Caco-2 (cell line): ENCODE measurements at regions of chr12 and their contacts with region 1.

Region 1: DNA sequence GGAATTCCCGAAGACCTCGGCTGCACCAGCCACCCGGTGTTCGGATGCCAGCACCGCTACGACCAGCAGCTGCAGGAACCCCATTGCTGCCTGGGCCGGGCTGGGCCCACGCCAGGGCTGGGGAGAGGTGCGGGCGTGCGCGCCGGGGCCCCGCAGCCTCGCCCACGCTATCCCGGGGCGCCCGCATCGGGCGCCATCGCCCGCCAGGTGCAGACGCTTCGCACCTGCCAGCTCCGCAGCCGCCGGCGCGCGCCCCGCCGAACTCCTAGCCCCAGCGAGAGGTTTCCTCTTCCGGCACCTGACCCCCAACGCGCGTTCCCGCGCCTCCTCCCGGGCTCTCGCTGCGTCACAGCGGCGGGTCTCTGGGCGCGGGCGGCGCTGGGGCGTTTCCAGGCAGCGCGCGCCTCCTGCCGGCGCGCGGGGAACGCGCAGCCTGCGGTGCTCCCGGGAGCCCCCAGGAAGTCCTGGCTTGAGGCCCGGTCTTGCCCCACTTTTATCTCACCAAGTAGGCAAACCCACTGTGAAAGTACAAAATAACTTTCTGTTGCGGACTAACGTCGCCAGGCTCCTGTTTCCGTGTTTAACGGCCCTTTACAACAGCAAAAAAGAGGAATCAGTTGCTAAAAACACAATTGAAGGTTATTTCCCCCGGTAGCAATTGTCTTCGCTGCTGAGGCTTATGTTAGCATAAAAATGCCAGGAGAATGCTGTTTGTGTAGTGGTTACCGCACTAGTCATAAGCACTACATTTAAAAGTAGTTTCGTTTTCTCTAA is at the start of gene TM7SF3:
- DNase-seq: peak; percentile 97 to 99
- H3K4me3 ChIP-seq: peak within 1 kb of the TSS; percentile 62
- H3K4me3 Mint-ChIP-seq: peak within 1 kb of the TSS; percentile 90
- H3K27ac Mint-ChIP-seq: peak within 1 kb of the TSS; percentile 13
- H3K4me1 ChIP-seq: peaks cover 18% of the 10 kb centered on the region
- H3K4me1 Mint-ChIP-seq: peaks cover 25% of the 10 kb centered on the region
- H3K27me3 ChIP-seq: no peaks in the 10 kb centered on the region
- H3K27me3 Mint-ChIP-seq: no peaks in the 10 kb centered on the region
- CTCF ChIP-seq: peak; percentile 89 to 99
- total RNA-seq, gene TM7SF3: 82.9 and 83.0 TPM in 2 replicates

Region 2: DNA sequence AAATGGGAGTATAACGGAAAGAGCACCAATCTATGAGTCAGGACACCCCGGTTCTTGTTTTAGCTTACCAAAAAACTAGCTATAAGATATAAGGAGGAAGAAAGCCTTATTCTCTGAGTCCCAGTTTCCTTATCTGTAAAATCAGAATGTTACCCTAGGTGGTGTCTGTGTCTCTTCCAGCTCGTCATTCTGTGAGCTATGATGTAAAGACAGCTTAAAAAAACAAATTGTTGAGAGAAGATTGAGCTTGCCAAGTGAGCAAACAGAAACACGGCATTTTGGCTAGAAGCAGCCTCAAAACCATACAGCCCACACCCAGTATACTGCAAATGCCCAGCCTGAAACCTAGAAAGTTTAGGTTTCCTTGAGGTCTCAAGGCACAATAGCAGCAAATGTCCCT is 667.6 kb before region 1 on chr12:
- CTCF ChIA-PET with region 1: no interaction called
- POLR2A ChIA-PET with region 1: no interaction called
- intact Hi-C with region 1: no loop called
- DNase-seq: no peak
- H3K4me3 ChIP-seq: no peak overlapping the region
- H3K4me3 Mint-ChIP-seq: no peak overlapping the region
- H3K27ac Mint-ChIP-seq: no peak overlapping the region
- H3K4me1 ChIP-seq: no peaks in the 10 kb centered on the region
- H3K4me1 Mint-ChIP-seq: no peaks in the 10 kb centered on the region
- H3K27me3 ChIP-seq: no peaks in the 10 kb centered on the region
- H3K27me3 Mint-ChIP-seq: no peaks in the 10 kb centered on the region
- CTCF ChIP-seq: no peak

Region 3: DNA sequence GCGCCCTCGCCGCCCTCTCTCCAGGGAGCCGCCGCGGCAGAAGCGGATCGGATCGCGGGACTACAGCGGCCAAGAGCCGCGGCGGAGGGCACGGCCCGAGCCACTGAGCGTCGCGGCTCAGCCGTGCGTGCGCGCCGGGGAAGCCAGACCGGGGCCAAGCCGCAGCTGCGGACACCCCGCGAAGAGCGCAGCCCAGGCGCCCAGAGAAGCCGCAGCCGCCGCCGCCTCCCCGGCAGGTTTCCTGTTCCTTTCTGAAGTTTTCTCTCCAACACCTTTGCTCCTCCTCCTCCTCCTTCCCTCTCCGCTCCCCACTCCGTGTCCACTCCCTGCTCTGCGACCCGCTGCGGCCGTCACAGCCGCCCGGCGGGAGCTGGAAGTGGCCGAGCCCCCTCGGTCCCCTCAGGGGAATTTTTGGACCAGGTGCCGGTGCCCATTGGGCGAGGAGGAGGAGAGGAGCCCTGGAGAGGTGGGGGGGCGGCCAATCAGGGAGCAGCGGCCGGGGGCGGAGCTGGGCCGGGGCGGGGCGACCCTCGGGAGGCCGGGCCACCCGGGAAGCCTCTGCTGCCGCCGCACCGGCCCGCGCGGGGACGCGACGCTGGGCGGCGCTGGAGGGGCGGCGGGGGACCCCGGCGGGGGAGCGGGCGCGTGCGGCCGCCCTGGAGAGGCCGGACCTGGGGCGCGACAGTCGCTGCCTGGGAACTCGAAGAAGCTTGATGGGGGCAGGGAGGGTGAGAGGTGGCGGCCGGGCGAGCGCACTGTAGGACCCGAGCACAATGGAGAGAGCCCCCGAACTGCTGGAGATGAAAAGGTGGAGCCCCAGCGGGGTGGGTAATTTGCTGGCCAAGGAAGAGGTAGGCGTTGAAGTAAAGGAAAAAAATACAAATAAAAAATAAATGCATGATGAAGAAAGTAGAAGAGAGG is 181.2 kb before region 1 on chr12 and contains the start of gene ITPR2:
- CTCF ChIA-PET with region 1: interaction called, 21 read pairs
- POLR2A ChIA-PET with region 1: interaction called, 4 read pairs
- intact Hi-C with region 1: loop called (anchors 5 kb)
- DNase-seq: peak; percentile 98 to 99
- H3K4me3 ChIP-seq: peak within 1 kb of the TSS; percentile 97
- H3K4me3 Mint-ChIP-seq: peak within 1 kb of the TSS; percentile 87
- H3K27ac Mint-ChIP-seq: peak within 1 kb of the TSS; percentile 86
- H3K4me1 ChIP-seq: 0 out of 2 replicates have a peak, but pooled peaks cover 8% of the 10 kb centered on the region
- H3K4me1 Mint-ChIP-seq: peaks cover 16% of the 10 kb centered on the region
- H3K27me3 ChIP-seq: no peaks in the 10 kb centered on the region
- H3K27me3 Mint-ChIP-seq: no peaks in the 10 kb centered on the region
- CTCF ChIP-seq: peak; percentile 18 to 36
- total RNA-seq, gene ITPR2: 41.6 and 51.5 TPM in 2 replicates

Region 4: GRCh38 chr12:26884765-26885576 is 129.3 kb before region 1 on chr12:
- CTCF ChIA-PET with region 1: interaction called, 3 read pairs
- POLR2A ChIA-PET with region 1: no interaction called
- intact Hi-C with region 1: loop called (anchors 1 kb)
- DNase-seq: peak; percentile 90 to 92
- H3K4me3 ChIP-seq: no peak overlapping the region
- H3K4me3 Mint-ChIP-seq: no peak overlapping the region
- H3K27ac Mint-ChIP-seq: no peak overlapping the region
- H3K4me1 ChIP-seq: no peaks in the 10 kb centered on the region
- H3K4me1 Mint-ChIP-seq: no peaks in the 10 kb centered on the region
- H3K27me3 ChIP-seq: no peaks in the 10 kb centered on the region
- H3K27me3 Mint-ChIP-seq: no peaks in the 10 kb centered on the region
- CTCF ChIP-seq: peak; percentile 98 to 99

Region 5: DNA sequence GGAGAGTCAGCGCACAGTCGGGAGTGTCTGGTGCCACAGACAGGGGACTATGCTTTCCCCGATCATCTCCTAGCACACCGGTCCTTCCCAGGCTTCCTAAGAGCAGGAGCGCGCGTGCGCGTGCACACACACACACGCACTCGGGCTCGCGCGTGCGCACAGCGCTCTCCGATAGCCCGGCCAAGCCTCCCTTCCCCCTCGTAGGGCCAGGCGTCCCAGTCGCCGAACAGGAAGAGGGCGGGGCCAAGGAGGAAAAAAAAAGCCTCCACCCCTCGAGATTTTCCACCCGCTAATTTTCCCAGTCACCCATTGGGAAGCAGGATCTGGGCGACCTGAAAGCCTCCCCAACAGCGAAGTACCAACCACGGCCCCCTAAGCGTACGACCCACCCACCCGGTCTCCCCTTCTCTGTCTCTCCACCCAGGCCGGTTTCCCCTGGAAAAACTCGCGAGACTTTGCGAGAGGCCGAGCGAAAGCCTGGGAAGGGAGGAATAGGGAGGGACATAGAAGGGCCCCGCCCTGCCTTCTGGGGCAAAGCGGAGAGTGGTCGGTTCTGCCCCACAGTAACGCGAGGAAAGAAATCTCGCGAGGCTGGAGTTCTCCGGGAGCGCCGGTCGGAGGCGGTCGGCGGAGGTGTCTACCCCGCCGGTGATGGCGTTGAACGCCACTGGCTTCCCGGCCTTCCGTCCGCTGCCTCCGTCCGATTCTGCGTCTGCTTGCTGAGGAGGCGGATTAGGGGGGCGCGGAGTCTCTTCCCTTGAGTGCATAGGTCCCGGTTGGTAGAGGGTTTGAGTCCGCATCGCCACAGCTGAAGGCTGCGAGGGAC is 76.2 kb before region 1 on chr12 and contains the starts of genes FGFR1OP2 and INTS13:
- CTCF ChIA-PET with region 1: interaction called, 3 read pairs
- POLR2A ChIA-PET with region 1: no interaction called
- intact Hi-C with region 1: loop called (anchors 1 kb)
- DNase-seq: peak; percentile 100
- H3K4me3 ChIP-seq: peak within 1 kb of the TSS; percentile 96
- H3K4me3 Mint-ChIP-seq: peak within 1 kb of the TSS; percentile 95
- H3K27ac Mint-ChIP-seq: peak within 1 kb of the TSS; percentile 91
- H3K4me1 ChIP-seq: peaks cover 22% of the 10 kb centered on the region
- H3K4me1 Mint-ChIP-seq: peaks cover 30% of the 10 kb centered on the region
- H3K27me3 ChIP-seq: no peaks in the 10 kb centered on the region
- H3K27me3 Mint-ChIP-seq: no peaks in the 10 kb centered on the region
- CTCF ChIP-seq: no peak
- total RNA-seq, gene FGFR1OP2: 77.9 and 86.9 TPM in 2 replicates
- total RNA-seq, gene INTS13: 40.1 and 41.5 TPM in 2 replicates

Region 6: GRCh38 chr12:27003421-27004381 is 10.6 kb before region 1 on chr12:
- CTCF ChIA-PET with region 1: interaction called, 14 read pairs
- POLR2A ChIA-PET with region 1: no interaction called
- intact Hi-C with region 1: loop called (anchors 1 kb)
- DNase-seq: peak in 1 of 2 experiments; percentile 46
- H3K4me3 ChIP-seq: no peak overlapping the region
- H3K4me3 Mint-ChIP-seq: peak overlapping the region; percentile 20
- H3K27ac Mint-ChIP-seq: peak overlapping the region; percentile 86
- H3K4me1 ChIP-seq: peaks cover 36% of the 10 kb centered on the region
- H3K4me1 Mint-ChIP-seq: peaks cover 22% of the 10 kb centered on the region
- H3K27me3 ChIP-seq: no peaks in the 10 kb centered on the region
- H3K27me3 Mint-ChIP-seq: no peaks in the 10 kb centered on the region
- CTCF ChIP-seq: no peak

Region 7: GRCh38 chr12:27142101-27142721 is 127.9 kb after region 1 on chr12:
- CTCF ChIA-PET with region 1: no interaction called
- POLR2A ChIA-PET with region 1: no interaction called
- intact Hi-C with region 1: loop called (anchors 2 kb)
- DNase-seq: peak; percentile 77 to 82
- H3K4me3 ChIP-seq: no peak overlapping the region
- H3K4me3 Mint-ChIP-seq: no peak overlapping the region
- H3K27ac Mint-ChIP-seq: no peak overlapping the region
- H3K4me1 ChIP-seq: no peaks in the 10 kb centered on the region
- H3K4me1 Mint-ChIP-seq: peaks cover 6% of the 10 kb centered on the region
- H3K27me3 ChIP-seq: no peaks in the 10 kb centered on the region
- H3K27me3 Mint-ChIP-seq: peaks cover 2% of the 10 kb centered on the region
- CTCF ChIP-seq: peak; percentile 90 to 94

Region 8: GRCh38 chr12:27305673-27306456 is 291.6 kb after region 1 on chr12:
- CTCF ChIA-PET with region 1: interaction called, 22 read pairs
- POLR2A ChIA-PET with region 1: no interaction called
- intact Hi-C with region 1: loop called (anchors 2 kb)
- DNase-seq: peak in 1 of 2 experiments; percentile 27
- H3K4me3 ChIP-seq: no peak overlapping the region
- H3K4me3 Mint-ChIP-seq: no peak overlapping the region
- H3K27ac Mint-ChIP-seq: no peak overlapping the region
- H3K4me1 ChIP-seq: peaks cover 11% of the 10 kb centered on the region
- H3K4me1 Mint-ChIP-seq: peaks cover 19% of the 10 kb centered on the region
- H3K27me3 ChIP-seq: no peaks in the 10 kb centered on the region
- H3K27me3 Mint-ChIP-seq: no peaks in the 10 kb centered on the region
- CTCF ChIP-seq: peak; percentile 38 to 77